ENCODE measurements at regions of chr1 and their contacts with region 1.

Region 1: GRCh38 chr1:3553166-3553939 is 58.0 kb downstream of the MEGF6 start:
- DNase-seq: no peak
- H3K4me3 ChIP-seq: no peak overlapping the region
- H3K27ac ChIP-seq: no peak overlapping the region
- H3K4me1 ChIP-seq: peaks cover 19 to 40% of the 10 kb centered on the region in 2 donors
- H3K27me3 ChIP-seq: no peaks in the 10 kb centered on the region
- CTCF ChIP-seq: no peak

Region 2: DNA sequence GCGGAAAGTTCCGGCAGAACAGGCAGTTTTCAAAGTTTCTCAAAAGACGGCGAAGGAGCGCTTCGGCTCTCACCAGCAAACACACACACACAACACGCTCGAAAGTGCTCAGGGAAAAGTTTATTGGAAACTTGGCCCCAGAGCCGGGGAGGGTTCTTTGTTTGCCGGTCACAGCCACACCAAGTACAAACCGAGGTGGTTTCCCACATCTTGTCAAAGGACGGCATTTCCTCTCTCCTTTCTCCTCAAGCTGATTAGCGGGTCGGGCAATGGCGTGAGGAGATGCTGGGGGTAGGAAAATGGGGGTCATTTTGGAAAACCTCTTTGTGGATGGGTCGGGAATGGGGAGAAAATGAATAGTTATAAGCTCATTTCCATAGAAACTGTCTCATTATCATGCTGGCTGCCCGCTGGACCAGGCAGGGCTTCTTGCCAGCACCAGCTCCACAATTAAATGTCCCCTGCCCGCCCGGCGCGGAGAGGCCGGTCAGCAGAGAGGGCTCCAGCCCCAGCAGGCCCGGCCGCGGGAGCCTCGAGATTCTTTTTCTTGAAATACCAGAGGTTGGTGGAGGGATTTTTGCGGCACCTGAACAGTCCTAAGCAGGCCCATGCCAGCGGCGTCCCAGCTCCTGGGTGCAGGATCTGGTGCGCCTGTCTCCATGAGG is 392.0 kb before region 1 on chr1:
- intact Hi-C with region 1: no loop called
- DNase-seq: no peak
- H3K4me3 ChIP-seq: peak overlapping the region; percentile 14 to 28
- H3K27ac ChIP-seq: peak overlapping the region; percentile 75 to 79
- H3K4me1 ChIP-seq: peaks cover 5 to 38% of the 10 kb centered on the region in 2 donors
- H3K27me3 ChIP-seq: no peaks in the 10 kb centered on the region
- CTCF ChIP-seq: no peak

Region 3: DNA sequence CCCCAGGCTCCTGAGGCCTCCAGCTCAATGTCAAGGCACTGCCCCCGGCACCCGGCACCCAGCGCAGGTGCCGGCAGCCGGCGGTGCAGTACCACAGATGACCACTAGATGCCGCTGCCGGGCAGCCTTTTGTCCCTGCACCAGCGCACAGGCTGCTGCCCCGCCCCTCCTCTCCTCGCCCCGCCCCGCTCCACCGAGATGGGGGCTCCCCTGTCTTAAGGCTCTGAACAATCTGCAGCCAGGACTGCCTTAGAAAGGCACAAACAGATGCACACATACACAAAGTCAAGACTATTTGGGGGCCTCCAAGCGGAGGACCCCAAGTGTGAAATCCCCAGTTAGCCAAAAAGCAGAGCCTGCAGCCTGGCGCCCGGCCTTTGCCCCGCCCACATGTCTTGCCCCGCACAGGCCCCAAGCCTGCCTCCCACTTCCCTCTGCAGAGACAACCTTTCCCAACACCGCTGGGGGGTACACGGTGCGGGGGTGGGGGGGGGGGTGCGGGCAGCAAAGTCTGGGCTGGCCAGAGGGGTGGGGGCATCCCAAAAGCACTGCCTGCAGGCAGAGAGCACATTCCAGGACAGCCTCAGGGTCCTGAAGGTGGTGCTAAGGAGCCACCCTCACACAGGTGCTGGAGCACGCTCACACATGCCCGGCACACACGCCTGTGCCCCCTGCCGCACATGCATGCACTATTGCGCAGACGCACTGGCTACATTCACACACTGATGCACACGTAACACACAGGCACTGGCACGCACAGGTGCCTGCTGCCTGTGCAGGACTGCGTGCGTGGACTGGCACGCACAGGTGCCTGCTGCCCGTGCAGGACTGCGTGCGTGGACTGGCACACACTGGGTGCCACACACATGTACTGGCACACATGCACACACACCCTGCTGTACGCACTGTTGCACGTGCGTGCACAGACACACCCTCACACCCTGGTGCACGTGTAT is 61.8 kb before region 1 on chr1:
- intact Hi-C with region 1: loop called (anchors 5 kb)
- DNase-seq: peak in 1 of 2 donors; percentile 75
- H3K4me3 ChIP-seq: no peak overlapping the region
- H3K27ac ChIP-seq: no peak overlapping the region
- H3K4me1 ChIP-seq: no peaks in the 10 kb centered on the region
- H3K27me3 ChIP-seq: no peaks in the 10 kb centered on the region
- CTCF ChIP-seq: peak; percentile 95 to 100 (median 100)

Region 4: DNA sequence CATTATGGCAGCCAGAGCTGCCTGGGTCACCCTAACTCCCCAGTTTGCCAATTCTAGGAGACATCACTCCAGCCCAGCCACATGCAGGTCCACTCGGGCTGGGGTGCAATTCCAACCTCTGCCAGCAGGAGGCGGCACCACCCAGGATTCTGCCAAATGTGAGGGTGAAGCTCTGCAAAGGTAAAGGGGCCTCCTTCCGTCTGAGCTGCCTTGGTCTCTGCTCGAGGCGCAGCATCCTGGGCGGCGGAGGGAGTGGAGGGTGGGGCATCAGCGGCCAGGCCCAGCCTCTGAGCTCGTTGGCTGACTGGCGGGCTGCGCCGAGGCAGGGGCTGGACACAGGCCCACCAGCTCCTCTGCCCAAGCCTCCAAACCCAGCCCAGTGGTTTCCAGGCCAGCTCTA is 35.1 kb before region 1 on chr1:
- intact Hi-C with region 1: loop called (anchors 5 kb)
- DNase-seq: no peak
- H3K4me3 ChIP-seq: no peak overlapping the region
- H3K27ac ChIP-seq: no peak overlapping the region
- H3K4me1 ChIP-seq: peaks cover 3 to 5% of the 10 kb centered on the region in 2 donors
- H3K27me3 ChIP-seq: no peaks in the 10 kb centered on the region
- CTCF ChIP-seq: peak; percentile 40 to 73 (median 71)

Region 5: GRCh38 chr1:3611170-3612019 is 58.0 kb after region 1 on chr1 and contains the start of gene MEGF6:
- intact Hi-C with region 1: no loop called
- DNase-seq: no peak
- H3K4me3 ChIP-seq: peak within 1 kb of the TSS; percentile 53 to 59
- H3K27ac ChIP-seq: no peak within 1 kb of the TSS
- H3K4me1 ChIP-seq: peaks cover 3 to 15% of the 10 kb centered on the region in 2 donors
- H3K27me3 ChIP-seq: peaks cover 6% of the 10 kb centered on the region
- CTCF ChIP-seq: no peak
- total RNA-seq, gene MEGF6: 194 TPM

Region 6: GRCh38 chr1:3702990-3703728 is 149.8 kb after region 1 on chr1:
- intact Hi-C with region 1: no loop called
- DNase-seq: no peak
- H3K4me3 ChIP-seq: no peak overlapping the region
- H3K27ac ChIP-seq: no peak overlapping the region
- H3K4me1 ChIP-seq: no peaks in the 10 kb centered on the region
- H3K27me3 ChIP-seq: no peaks in the 10 kb centered on the region
- CTCF ChIP-seq: no peak

Region 7: GRCh38 chr1:3939242-3940080 is 386.1 kb after region 1 on chr1:
- intact Hi-C with region 1: no loop called
- DNase-seq: no peak
- H3K4me3 ChIP-seq: no peak overlapping the region
- H3K27ac ChIP-seq: no peak overlapping the region
- H3K4me1 ChIP-seq: no peaks in the 10 kb centered on the region
- H3K27me3 ChIP-seq: no peaks in the 10 kb centered on the region
- CTCF ChIP-seq: no peak

Measured in ascending aorta (tissue), 2 donors.